ENCODE measurements at regions of chr1 and their contacts with region 1.

Region 1: GRCh38 chr1:213070406-213070805 is 19.4 kb downstream of the RPS6KC1 start:
- DNase-seq: peak; percentile 72
- H3K4me3 Mint-ChIP-seq: no peak overlapping the region
- H3K27ac Mint-ChIP-seq: no peak overlapping the region
- H3K4me1 Mint-ChIP-seq: peaks cover 5% of the 10 kb centered on the region
- H3K27me3 Mint-ChIP-seq: no peaks in the 10 kb centered on the region
- CTCF ChIP-seq: peak; percentile 38

Region 2: DNA sequence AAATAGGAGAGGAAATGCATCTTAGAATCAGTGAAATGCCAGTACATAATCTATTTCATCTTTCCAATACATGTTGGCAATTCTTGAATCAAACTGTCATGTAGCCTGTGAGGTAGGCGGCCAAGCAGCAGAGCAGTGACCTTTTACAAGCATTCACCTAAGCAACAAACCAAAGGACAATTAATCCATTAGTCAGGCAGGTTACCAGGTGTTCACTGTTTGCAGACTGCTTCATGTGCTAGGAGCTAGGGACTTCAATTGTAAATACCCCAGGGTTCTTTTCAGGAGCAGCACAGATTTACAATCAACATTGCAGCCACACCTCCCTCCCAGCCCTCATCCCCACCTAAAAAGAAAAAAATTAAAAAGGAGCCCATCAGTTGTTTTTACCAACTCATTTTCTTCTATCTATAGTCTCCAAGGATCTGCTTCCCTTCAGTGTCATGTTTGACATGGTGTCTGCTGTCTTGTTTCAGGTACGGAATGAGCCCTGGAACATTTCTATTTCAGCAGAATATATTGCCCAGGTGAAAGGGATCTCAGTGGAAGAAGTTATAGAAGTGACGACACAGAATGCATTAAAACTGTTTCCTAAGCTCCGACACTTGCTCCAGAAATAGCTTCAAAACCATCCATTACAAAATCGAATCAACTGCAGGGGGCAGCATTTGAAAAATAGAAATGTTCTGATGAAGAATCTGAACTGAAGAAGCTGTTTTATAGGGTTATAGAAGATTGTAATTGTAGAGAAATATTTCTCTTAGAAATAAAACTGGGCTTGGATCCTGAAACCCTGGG is 255.7 kb before region 1 on chr1:
- CTCF ChIA-PET with region 1: interaction called, 4 read pairs
- POLR2A ChIA-PET with region 1: no interaction called
- intact Hi-C with region 1: loop called (anchors 10 kb)
- DNase-seq: peak; percentile 57
- H3K4me3 Mint-ChIP-seq: no peak overlapping the region
- H3K27ac Mint-ChIP-seq: no peak overlapping the region
- H3K4me1 Mint-ChIP-seq: peaks cover 4% of the 10 kb centered on the region
- H3K27me3 Mint-ChIP-seq: no peaks in the 10 kb centered on the region
- CTCF ChIP-seq: peak; percentile 52

Region 3: GRCh38 chr1:213003256-213003655 is 67.2 kb before region 1 on chr1:
- CTCF ChIA-PET with region 1: interaction called, 10 read pairs
- POLR2A ChIA-PET with region 1: interaction called, 3 read pairs
- intact Hi-C with region 1: no loop called
- DNase-seq: no peak
- H3K4me3 Mint-ChIP-seq: no peak overlapping the region
- H3K27ac Mint-ChIP-seq: no peak overlapping the region
- H3K4me1 Mint-ChIP-seq: no peaks in the 10 kb centered on the region
- H3K27me3 Mint-ChIP-seq: no peaks in the 10 kb centered on the region
- CTCF ChIP-seq: no peak

Region 4: GRCh38 chr1:213015099-213016050 is 55.0 kb before region 1 on chr1 and contains the start of gene ANGEL2:
- CTCF ChIA-PET with region 1: interaction called, 5 read pairs
- POLR2A ChIA-PET with region 1: interaction called, 4 read pairs
- intact Hi-C with region 1: loop called (anchors 1 kb)
- DNase-seq: peak; percentile 100
- H3K4me3 Mint-ChIP-seq: peak within 1 kb of the TSS; percentile 91
- H3K27ac Mint-ChIP-seq: peak within 1 kb of the TSS; percentile 84
- H3K4me1 Mint-ChIP-seq: peaks cover 13% of the 10 kb centered on the region
- H3K27me3 Mint-ChIP-seq: no peaks in the 10 kb centered on the region
- CTCF ChIP-seq: no peak
- total RNA-seq, gene ANGEL2: 87.1 and 89.7 TPM in 2 replicates

Region 5: DNA sequence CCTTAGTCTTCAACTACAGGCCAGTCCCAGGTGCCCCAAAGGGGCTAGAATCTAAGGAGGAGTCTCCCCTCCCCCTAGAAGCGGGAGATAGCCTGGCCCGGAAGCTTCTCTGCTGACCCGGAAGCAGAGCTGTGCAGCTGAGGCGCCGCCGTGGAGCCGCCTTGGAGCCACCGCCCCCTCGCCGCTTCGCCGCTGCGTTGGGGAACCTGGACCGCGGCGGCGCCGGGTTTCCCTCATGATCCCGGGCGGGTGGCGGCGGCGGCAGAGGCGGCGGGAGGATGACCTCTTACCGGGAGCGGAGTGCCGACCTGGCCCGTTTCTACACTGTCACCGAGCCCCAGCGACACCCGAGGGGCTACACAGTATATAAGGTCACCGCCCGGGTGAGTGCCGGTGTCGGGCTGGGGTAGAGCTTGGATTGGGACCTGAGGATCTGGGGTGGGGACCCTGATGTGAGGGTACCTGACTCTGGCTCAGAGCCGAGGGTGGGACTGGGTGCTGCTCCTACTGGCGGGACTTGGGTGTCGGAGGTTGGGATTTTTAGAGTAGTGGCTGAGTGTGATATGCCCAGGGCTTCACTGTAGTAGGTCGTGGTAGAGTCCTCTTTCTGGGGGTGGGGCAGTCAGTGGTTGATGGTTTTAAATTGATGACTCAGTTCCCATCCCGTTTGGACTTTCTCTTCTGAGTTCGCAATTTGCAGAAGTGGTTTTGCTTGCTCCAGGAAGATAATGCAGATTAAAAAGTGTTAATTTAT is 19.1 kb before region 1 on chr1 and contains the start of gene RPS6KC1:
- CTCF ChIA-PET with region 1: interaction called, 16 read pairs
- POLR2A ChIA-PET with region 1: interaction called, 14 read pairs
- intact Hi-C with region 1: no loop called
- DNase-seq: peak; percentile 92
- H3K4me3 Mint-ChIP-seq: peak within 1 kb of the TSS; percentile 94
- H3K27ac Mint-ChIP-seq: peak within 1 kb of the TSS; percentile 95
- H3K4me1 Mint-ChIP-seq: peaks cover 22% of the 10 kb centered on the region
- H3K27me3 Mint-ChIP-seq: no peaks in the 10 kb centered on the region
- CTCF ChIP-seq: peak; percentile 15
- total RNA-seq, gene RPS6KC1: 24.5 and 24.9 TPM in 2 replicates

Region 6: DNA sequence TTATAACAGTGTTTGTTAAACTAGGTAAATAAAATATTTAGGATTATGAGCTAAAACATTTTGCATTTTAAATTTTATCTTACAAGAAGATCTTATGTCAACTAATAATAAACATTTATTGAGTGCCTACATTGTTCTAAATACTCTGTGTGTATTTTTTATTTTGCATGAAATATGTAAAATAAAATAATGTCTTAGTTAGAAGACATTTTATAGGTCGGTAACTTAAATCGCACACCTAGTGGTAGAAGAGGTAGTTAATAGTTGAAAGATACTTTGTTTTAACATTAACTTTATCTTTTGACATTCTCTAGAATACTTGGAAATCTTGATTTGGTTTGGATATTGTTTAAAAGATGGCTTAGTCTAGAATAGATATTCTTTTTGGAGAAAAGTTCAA is 41.1 kb after region 1 on chr1:
- CTCF ChIA-PET with region 1: no interaction called
- POLR2A ChIA-PET with region 1: no interaction called
- intact Hi-C with region 1: no loop called
- DNase-seq: no peak
- H3K4me3 Mint-ChIP-seq: no peak overlapping the region
- H3K27ac Mint-ChIP-seq: no peak overlapping the region
- H3K4me1 Mint-ChIP-seq: peaks cover 5% of the 10 kb centered on the region
- H3K27me3 Mint-ChIP-seq: no peaks in the 10 kb centered on the region
- CTCF ChIP-seq: no peak

Region 7: GRCh38 chr1:213231795-213232231 is 161.4 kb after region 1 on chr1:
- CTCF ChIA-PET with region 1: no interaction called
- POLR2A ChIA-PET with region 1: no interaction called
- intact Hi-C with region 1: no loop called
- DNase-seq: no peak
- H3K4me3 Mint-ChIP-seq: no peak overlapping the region
- H3K27ac Mint-ChIP-seq: no peak overlapping the region
- H3K4me1 Mint-ChIP-seq: no peaks in the 10 kb centered on the region
- H3K27me3 Mint-ChIP-seq: no peaks in the 10 kb centered on the region
- CTCF ChIP-seq: no peak

Measured in MCF 10A (cell line).